SK-N-SH (cell line): ENCODE measurements at regions of chr7 and their contacts with region 1.

Region 1: DNA sequence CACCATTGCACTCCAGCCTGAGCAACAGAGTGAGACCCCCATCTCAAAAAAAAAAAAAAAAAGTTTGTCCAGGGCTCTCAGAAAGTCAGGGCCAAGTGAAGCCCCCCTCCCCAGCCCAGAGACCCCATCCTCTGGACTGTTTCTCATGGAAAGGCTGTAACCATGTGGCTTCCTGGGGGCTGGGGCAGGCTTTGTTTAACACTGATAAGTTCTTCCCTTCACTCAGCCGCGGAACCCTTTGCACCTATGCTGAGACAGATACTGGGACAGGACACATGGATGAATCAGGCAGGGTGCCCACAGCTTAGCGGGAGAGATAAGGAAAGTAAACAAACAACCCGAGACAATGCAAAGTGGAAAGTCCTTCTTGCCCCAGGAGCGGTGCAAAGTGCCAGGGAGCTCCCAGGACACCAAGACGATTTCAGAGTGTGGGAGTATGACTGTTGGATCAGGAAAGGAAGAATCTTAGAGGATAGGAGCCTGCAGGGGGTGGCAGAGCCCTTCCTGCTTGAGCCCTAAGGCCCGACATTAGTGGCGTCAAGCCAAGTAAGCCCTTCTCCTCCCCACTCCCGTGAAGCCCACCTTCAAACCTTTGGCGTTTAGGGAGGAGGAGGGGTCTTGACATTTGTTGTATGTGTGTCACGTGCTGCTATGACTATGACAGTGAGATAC is 11.6 kb downstream of the MLXIPL start:
- DNase-seq: no peak
- H3K4me3 ChIP-seq: no peak overlapping the region
- H3K27ac ChIP-seq: no peak overlapping the region
- H3K4me1 ChIP-seq: no peaks in the 10 kb centered on the region; a peak in 1 of 4 replicates
- H3K27me3 ChIP-seq: no peaks in the 10 kb centered on the region; the same call in 1 of the 2 replicates
- CTCF ChIP-seq: peak; percentile 47
- EP300 ChIP-seq: no peak
- RAD21 ChIP-seq: peak; percentile 54; the same call in 1 of the 2 replicates

Region 2: DNA sequence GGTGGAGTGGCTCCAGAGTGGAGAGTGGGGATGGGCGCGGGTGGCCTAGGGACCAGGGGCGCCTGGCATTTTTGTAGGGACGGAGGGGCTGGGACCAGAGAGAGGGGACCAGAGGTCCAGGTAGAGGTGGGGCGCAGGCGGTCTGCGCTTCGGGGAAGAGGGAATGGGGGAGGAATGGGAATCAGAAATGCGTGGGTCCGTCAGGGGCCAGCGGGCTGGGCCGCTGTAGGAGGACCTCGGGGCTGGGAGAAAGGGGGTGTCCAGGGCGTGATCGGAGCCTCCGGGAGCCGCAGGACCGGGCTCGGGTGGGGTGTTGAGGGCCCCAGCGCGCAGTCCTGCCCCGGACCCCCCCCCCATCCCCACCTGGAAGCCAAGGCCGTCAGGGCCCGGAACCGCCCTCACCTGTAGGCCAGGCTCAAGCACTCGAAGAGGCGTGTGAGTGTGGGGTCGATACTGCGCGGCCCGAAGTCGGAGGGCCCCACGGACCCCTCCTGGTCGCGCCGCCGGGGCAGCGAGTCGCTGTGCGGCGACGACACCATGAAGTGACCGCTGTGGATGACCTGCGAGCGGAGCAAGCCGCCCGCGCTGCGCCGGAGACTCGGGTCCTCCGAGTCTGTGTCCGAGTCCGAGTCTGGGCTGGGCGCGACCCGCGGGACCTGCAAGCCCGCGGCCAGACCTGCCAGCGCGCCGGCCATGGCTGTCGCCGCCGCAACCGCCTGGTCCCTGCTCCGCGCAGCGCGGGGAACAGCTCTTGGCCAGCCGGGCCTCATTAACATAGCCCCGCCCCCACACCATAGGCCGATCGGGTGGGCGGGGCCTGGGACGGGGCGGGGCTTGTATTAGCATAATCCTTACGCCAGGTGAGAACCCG is 11.3 kb after region 1 on chr7 and contains the start of gene MLXIPL:
- CTCF ChIA-PET with region 1: interaction called, 235 read pairs
- POLR2A ChIA-PET with region 1: no interaction called
- DNase-seq: peak; percentile 100
- H3K4me3 ChIP-seq: peak within 1 kb of the TSS; percentile 48 to 61
- H3K27ac ChIP-seq: no peak within 1 kb of the TSS
- H3K4me1 ChIP-seq: no peaks in the 10 kb centered on the region; a peak in 1 of 4 replicates
- H3K27me3 ChIP-seq: peaks cover 50% of the 10 kb centered on the region
- CTCF ChIP-seq: no peak
- EP300 ChIP-seq: no peak
- RAD21 ChIP-seq: no peak
- polyA plus RNA-seq, gene MLXIPL: 0.21 and 0.32 TPM in 2 replicates

Region 3: DNA sequence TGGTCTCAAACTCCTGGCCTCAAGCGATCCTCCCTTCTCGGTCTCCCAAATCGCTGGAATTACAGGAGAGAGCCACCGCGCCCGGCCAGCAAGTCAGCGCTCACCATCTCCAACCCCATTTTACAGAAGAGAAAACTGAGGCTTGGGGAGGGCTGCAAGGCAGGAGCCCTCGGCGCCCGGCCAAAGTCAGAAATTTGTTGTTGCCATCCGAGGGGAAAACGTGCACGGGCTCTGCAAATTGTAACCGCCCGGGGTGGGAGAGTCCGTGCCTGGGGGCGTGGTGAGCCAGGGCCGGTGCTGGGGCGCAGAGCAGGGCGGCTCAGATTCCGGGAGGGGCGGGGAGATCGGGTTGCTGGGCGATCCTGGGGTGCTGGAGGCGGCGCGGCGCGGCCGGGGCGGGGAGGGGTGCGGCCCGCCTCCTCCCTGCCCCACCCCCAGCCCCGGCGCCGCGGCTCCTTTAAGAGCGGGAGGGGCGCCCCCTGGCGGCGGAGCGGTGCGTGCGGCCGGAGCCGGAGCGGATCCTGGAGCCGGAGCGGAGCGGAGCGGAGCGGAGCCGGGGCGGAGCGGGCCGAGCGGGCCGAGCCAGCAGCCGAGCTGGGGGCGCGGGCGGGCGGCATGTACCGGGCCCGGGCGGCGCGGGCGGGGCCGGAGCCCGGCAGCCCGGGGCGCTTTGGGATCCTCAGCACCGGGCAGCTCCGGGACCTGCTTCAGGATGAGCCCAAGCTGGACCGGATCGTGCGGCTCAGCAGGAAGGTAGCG is 54.8 kb after region 1 on chr7 and contains the start of gene VPS37D:
- CTCF ChIA-PET with region 1: interaction called, 125 read pairs
- POLR2A ChIA-PET with region 1: no interaction called
- DNase-seq: peak; percentile 100
- H3K4me3 ChIP-seq: peak within 1 kb of the TSS; percentile 70 to 75
- H3K27ac ChIP-seq: peak within 1 kb of the TSS in 1 of 2 experiments; percentile 22; a peak in 1 of 4 replicates
- H3K4me1 ChIP-seq: peaks cover 0 to 8% of the 10 kb centered on the region in 2 experiments; a peak in 1 of 4 replicates
- H3K27me3 ChIP-seq: 0 out of 2 replicates have a peak, but pooled peaks cover 6% of the 10 kb centered on the region
- CTCF ChIP-seq: peak; percentile 70
- EP300 ChIP-seq: peak in 1 of 2 experiments; percentile 27; a peak in 2 of 4 replicates
- RAD21 ChIP-seq: peak; percentile 64
- polyA plus RNA-seq, gene VPS37D: 5.7 and 7.4 TPM in 2 replicates

Region 4: GRCh38 chr7:73885975-73886798 is 273.5 kb after region 1 on chr7:
- CTCF ChIA-PET with region 1: no interaction called
- POLR2A ChIA-PET with region 1: no interaction called
- DNase-seq: peak; percentile 70
- H3K4me3 ChIP-seq: no peak overlapping the region
- H3K27ac ChIP-seq: peak overlapping the region in 1 of 2 experiments; percentile 37; a peak in 2 of 4 replicates
- H3K4me1 ChIP-seq: peaks cover 7 to 19% of the 10 kb centered on the region in 2 experiments; a peak in 2 of 4 replicates
- H3K27me3 ChIP-seq: no peaks in the 10 kb centered on the region
- CTCF ChIP-seq: no peak
- EP300 ChIP-seq: no peak
- RAD21 ChIP-seq: no peak